ENCODE measurements at regions of chr5 and their contacts with region 1.

Region 1: DNA sequence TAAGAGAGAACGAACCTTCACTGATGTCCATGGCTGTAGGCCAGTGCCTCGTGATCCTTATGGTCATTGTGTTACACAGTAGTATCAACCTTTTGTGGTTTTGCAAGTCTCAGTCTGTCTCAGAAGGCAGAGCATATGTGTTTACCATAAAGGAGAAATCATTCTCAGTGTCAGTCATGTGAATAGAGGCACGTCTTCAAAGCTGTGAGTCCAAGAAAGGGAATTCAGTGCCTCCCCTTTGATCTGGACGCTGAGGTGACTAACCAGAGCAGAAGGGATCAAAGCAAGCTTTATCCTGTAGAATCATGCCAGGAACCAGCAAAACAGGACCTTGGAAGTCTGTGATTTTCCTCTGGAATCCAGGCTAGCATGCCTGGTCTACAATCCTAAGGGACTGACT is 433.9 kb downstream of the DNAH5 start:
- DNase-seq: no peak
- ATAC-seq: no peak
- H3K4me3 ChIP-seq: no peak overlapping the region
- H3K4me3 Mint-ChIP-seq: no peak overlapping the region
- H3K27ac ChIP-seq: no peak overlapping the region
- H3K27ac Mint-ChIP-seq: no peak overlapping the region
- H3K4me1 ChIP-seq: no peaks in the 10 kb centered on the region
- H3K4me1 Mint-ChIP-seq: no peaks in the 10 kb centered on the region
- H3K27me3 ChIP-seq: no peaks in the 10 kb centered on the region
- H3K27me3 Mint-ChIP-seq: no peaks in the 10 kb centered on the region
- CTCF ChIP-seq: no peak

Region 2: GRCh38 chr5:13775218-13775617 is 264.6 kb after region 1 on chr5:
- CTCF ChIA-PET with region 1: no interaction called
- POLR2A ChIA-PET with region 1: no interaction called
- intact Hi-C with region 1: loop called (anchors 5 kb)
- DNase-seq: no peak
- ATAC-seq: no peak
- H3K4me3 ChIP-seq: no peak overlapping the region
- H3K4me3 Mint-ChIP-seq: no peak overlapping the region
- H3K27ac ChIP-seq: no peak overlapping the region
- H3K27ac Mint-ChIP-seq: no peak overlapping the region
- H3K4me1 ChIP-seq: no peaks in the 10 kb centered on the region
- H3K4me1 Mint-ChIP-seq: no peaks in the 10 kb centered on the region
- H3K27me3 ChIP-seq: no peaks in the 10 kb centered on the region
- H3K27me3 Mint-ChIP-seq: no peaks in the 10 kb centered on the region
- CTCF ChIP-seq: no peak